Activated CD4-positive, alpha-beta memory T cell treated with anti-CD3 and anti-CD28 coated beads for 36 hours (primary cell): ENCODE measurements at regions of chr1 and their contacts with region 1.

Region 1: GRCh38 chr1:89310505-89310904 is 37.8 kb upstream of the GBP5 start:
- DNase-seq: no peak
- H3K4me3 Mint-ChIP-seq: peak overlapping the region; percentile 14
- H3K27ac Mint-ChIP-seq: peak overlapping the region; percentile 85
- H3K4me1 Mint-ChIP-seq: peaks cover 45% of the 10 kb centered on the region
- H3K27me3 Mint-ChIP-seq: no peaks in the 10 kb centered on the region

Region 2: GRCh38 chr1:89286549-89287180 is 23.8 kb before region 1 on chr1:
- CTCF ChIA-PET with region 1: interaction called, 4 read pairs
- POLR2A ChIA-PET with region 1: interaction called, 18 read pairs
- intact Hi-C with region 1: no loop called
- DNase-seq: no peak
- H3K4me3 Mint-ChIP-seq: peak overlapping the region; percentile 38
- H3K27ac Mint-ChIP-seq: peak overlapping the region; percentile 78
- H3K4me1 Mint-ChIP-seq: peaks cover 65% of the 10 kb centered on the region
- H3K27me3 Mint-ChIP-seq: no peaks in the 10 kb centered on the region

Region 3: DNA sequence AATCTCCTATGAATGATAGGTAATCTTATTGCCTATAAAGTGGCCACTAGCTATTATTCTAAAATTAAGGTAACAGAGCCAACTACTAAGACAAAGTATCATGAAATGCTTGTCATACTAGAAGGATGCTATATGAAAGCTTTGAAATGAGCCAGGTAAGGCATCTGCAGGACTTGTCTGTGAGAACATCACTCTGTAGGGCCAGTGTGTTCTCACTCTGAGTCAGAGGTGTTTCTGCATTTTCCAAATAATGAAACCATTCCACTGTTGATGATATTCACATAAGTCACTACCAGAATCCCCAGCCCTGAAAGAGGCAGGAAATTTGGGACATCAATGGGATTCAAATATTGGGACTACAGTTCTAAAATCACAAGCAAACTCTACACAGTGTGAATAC is 12.0 kb before region 1 on chr1:
- CTCF ChIA-PET with region 1: interaction called, 11 read pairs
- POLR2A ChIA-PET with region 1: interaction called, 17 read pairs
- intact Hi-C with region 1: loop called (anchors 1 kb)
- DNase-seq: no peak
- H3K4me3 Mint-ChIP-seq: no peak overlapping the region
- H3K27ac Mint-ChIP-seq: no peak overlapping the region
- H3K4me1 Mint-ChIP-seq: peaks cover 63% of the 10 kb centered on the region
- H3K27me3 Mint-ChIP-seq: no peaks in the 10 kb centered on the region

Region 4: DNA sequence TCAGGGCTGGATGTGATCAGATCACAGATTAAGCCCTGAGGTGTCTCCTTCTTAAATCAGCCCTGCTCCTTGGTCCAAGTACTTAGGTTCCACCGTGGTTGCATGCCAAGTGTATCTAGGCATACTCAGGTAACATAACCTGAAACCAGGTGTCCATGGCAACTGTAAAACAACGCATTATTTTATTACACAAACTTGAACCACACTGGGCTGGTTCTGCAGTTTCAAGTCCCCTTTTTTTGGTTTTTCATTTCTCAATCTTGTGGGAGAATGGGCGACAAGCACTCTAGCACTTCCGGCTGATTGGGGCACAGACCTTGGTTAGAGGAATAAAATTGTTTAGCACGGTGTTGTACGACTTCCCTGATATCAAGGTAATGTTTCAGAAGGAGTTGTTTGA is 118.6 kb after region 1 on chr1:
- CTCF ChIA-PET with region 1: no interaction called
- POLR2A ChIA-PET with region 1: no interaction called
- intact Hi-C with region 1: loop called (anchors 1 kb)
- DNase-seq: no peak
- H3K4me3 Mint-ChIP-seq: no peak overlapping the region
- H3K27ac Mint-ChIP-seq: no peak overlapping the region
- H3K4me1 Mint-ChIP-seq: peaks cover 21% of the 10 kb centered on the region
- H3K27me3 Mint-ChIP-seq: no peaks in the 10 kb centered on the region